WTC11 (cell line): ENCODE measurements at regions of chr17 and their contacts with region 1.

Region 1: GRCh38 chr17:37047631-37048104 is 98.9 kb downstream of the AATF start:
- DNase-seq: peak; percentile 92
- ATAC-seq: peak; percentile 85
- H3K4me3 Mint-ChIP-seq: no peak overlapping the region
- H3K27ac Mint-ChIP-seq: peak overlapping the region; percentile 82
- H3K4me1 Mint-ChIP-seq: peaks cover 57% of the 10 kb centered on the region
- H3K27me3 Mint-ChIP-seq: no peaks in the 10 kb centered on the region
- CTCF ChIP-seq: peak; percentile 85

Region 2: DNA sequence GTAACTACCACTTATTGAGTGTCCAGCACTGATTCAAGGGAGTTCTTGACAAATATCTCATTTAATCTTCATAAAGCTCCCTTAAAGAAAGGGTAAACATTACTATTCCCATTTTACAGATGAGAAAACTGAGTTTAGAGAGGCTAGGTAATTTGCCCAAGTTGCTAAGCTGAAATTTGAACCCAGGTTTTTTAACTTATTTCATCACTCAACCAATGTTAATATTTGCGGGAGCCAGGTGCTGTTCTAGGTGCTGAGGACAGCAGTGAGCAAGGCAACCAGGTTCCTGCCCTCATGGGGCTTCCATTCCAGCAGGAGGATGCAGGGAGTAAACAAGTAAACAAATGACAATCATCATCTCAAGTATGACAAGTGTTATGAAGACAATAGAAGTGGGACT is 214.4 kb before region 1 on chr17:
- CTCF ChIA-PET with region 1: no interaction called
- POLR2A ChIA-PET with region 1: no interaction called
- DNase-seq: no peak
- ATAC-seq: no peak
- H3K4me3 Mint-ChIP-seq: no peak overlapping the region
- H3K27ac Mint-ChIP-seq: no peak overlapping the region
- H3K4me1 Mint-ChIP-seq: peaks cover 19% of the 10 kb centered on the region
- H3K27me3 Mint-ChIP-seq: peaks cover 6% of the 10 kb centered on the region
- CTCF ChIP-seq: no peak

Region 3: DNA sequence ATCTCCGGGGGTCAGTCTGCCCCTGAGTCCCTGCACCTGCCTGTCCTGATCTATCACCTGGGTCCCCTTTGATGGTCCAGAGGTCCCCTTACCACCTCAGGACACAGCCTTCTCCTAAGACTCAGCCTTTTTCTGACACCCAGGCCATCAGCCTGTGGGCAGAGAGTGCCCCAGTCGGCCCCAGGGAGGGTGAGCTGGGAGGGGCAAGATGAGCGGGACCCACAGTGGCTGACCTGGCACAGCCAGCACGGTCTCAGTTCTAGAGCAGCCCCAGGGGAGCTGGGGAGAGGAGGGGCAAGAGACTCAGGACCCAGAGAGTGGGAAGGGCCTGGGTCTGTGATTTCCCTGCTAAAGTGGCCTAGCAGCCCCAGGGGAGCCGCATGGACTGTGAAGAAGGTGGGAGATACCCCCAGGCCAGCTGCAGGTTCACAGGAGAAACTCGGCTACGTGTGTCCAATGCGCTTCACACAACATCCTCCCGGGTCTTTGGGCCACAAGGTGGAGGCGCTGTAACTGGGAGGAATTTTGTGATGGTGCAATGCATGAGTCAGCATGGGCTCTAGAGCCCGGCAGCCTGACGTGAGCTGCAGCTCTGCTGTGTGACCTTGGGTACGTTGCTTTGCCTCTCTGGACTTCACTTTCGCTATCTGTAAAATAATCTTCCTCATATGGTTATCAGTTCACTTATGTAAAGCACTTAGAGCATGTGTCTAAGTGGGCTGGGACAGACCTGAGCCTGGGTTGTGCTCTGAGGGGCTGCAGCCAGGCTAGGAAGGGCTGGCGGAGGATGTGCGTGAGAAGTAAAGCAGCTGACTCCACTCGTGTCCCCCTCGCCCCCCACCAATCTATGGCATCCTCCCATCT is 177.6 kb before region 1 on chr17:
- CTCF ChIA-PET with region 1: interaction called, 10 read pairs
- POLR2A ChIA-PET with region 1: no interaction called
- DNase-seq: peak; percentile 37
- ATAC-seq: peak; percentile 74
- H3K4me3 Mint-ChIP-seq: no peak overlapping the region
- H3K27ac Mint-ChIP-seq: no peak overlapping the region
- H3K4me1 Mint-ChIP-seq: peaks cover 14% of the 10 kb centered on the region
- H3K27me3 Mint-ChIP-seq: peaks cover 2% of the 10 kb centered on the region; the same call in 1 of the 2 replicates
- CTCF ChIP-seq: no peak

Region 4: DNA sequence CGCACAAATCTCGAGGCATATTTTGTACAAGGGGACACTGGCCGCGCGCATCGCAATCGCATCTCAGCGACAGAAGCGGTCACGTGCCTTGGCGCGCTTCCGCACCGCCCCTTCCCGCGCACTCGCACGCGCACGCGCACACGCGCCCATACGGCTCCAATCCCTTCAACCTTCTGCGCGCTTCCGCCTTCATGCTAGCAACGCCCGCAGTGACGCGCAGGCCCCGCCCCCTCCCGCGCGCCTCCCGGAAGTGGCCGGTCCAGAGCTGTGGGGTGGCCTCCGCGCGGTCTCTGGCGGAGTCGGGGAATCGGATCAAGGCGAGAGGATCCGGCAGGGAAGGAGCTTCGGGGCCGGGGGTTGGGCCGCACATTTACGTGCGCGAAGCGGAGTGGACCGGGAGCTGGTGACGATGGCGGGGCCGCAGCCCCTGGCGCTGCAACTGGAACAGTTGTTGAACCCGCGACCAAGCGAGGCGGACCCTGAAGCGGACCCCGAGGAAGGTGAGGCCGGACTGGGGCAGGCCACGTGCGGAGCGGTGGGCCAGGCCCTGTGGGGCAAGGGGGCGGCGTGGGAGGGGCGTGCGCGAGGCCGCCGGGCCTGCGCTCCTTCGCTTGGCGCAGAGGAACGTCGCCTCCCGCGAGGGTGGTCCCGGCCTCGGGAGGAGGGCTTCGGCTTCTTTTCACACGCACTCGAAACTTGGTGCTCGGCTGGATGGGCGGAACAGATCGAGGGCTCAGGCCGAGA is 98.8 kb before region 1 on chr17 and contains the start of gene AATF:
- CTCF ChIA-PET with region 1: interaction called, 16 read pairs
- POLR2A ChIA-PET with region 1: no interaction called
- DNase-seq: peak; percentile 96
- ATAC-seq: peak; percentile 92
- H3K4me3 Mint-ChIP-seq: peak within 1 kb of the TSS; percentile 91
- H3K27ac Mint-ChIP-seq: peak within 1 kb of the TSS; percentile 87
- H3K4me1 Mint-ChIP-seq: peaks cover 46% of the 10 kb centered on the region
- H3K27me3 Mint-ChIP-seq: peaks cover 56% of the 10 kb centered on the region
- CTCF ChIP-seq: no peak
- total RNA-seq, gene AATF: 48.9 to 61.0 TPM (median 49.8 TPM) in 3 replicates

Region 5: DNA sequence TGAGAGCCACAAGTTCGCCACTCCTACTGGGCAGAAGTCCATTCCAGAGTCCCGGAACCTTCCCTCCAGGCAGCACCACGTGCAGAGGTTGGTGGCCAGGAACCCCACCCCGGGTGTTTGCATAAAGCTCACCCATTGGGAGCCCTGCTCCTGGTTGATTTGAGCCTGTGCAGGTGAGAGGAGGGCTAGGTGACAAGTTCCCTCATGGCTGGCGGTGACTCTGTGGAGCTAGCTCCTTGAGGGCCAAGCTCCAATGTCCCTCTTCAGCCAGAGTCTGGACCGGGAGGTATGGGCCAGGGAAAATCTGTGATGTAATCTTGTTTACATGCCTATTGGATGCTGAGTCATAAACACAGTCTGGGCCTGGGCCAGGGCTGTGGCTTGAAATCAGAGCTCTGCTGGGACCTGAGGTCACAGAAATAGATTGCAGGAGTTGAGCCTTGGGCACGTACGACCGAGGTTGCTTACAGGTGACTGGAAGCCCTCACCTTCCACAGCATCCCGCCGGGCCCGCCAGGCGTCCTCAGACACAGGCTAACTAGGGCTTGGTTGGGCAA is 20.0 kb after region 1 on chr17:
- CTCF ChIA-PET with region 1: interaction called, 12 read pairs
- POLR2A ChIA-PET with region 1: no interaction called
- DNase-seq: no peak
- ATAC-seq: peak; percentile 23
- H3K4me3 Mint-ChIP-seq: peak overlapping the region; percentile 63; the same call in 1 of the 2 replicates
- H3K27ac Mint-ChIP-seq: peak overlapping the region; percentile 95
- H3K4me1 Mint-ChIP-seq: peaks cover 59% of the 10 kb centered on the region
- H3K27me3 Mint-ChIP-seq: peaks cover 8% of the 10 kb centered on the region; the same call in 1 of the 2 replicates
- CTCF ChIP-seq: no peak

Region 6: GRCh38 chr17:37094391-37094790 is 46.7 kb after region 1 on chr17:
- CTCF ChIA-PET with region 1: no interaction called
- POLR2A ChIA-PET with region 1: no interaction called
- DNase-seq: no peak
- ATAC-seq: no peak
- H3K4me3 Mint-ChIP-seq: no peak overlapping the region
- H3K27ac Mint-ChIP-seq: peak overlapping the region; percentile 61; the same call in 1 of the 2 replicates
- H3K4me1 Mint-ChIP-seq: peaks cover 16% of the 10 kb centered on the region
- H3K27me3 Mint-ChIP-seq: no peaks in the 10 kb centered on the region
- CTCF ChIP-seq: no peak